Activated CD4-positive, alpha-beta T cell treated with anti-CD3 and anti-CD28 coated beads, Interleukin-2, amount 10 ng/mL, durations not matched to agents 24 days and 14 days (primary cell): ENCODE measurements at regions of chr20 and their contacts with region 1.

Region 1: DNA sequence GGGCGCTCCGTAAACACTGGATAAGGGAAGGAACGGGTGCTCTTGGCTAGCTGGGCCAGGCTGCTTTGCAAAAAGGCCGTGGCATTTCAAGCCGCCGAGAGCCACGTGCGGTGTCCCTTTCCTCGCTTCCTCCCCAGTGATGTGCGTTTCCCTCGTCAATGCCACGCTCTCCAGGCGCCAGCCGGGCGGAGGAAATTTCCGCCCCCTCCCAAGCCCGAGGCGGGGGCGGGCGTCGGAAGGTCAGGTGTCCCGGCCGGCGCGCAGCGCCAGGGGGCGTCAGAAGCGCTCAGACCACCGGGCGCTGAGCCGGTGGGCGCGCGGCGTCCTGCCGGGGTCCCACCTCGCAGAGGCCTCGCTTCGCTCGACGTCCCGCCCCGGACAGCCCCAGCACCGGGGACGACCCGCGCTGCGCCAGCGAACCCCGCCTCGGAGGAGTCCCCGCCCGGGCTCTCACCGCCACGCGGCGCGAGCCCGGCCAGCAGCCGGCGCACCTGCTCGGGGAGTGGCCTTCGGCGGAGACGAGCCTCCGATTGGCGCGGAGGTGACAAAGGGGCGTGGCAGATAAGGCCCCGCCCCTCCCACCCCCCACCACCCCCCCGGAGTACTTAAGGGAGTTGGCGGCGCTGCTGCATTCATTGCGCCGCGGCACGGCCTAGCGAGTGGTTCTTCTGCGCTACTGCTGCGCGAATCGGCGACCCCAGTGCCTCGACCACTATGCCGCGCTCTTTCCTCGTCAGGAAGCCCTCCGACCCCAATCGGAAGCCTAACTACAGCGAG is at the start of gene SNAI1:
- DNase-seq: peak; percentile 95
- H3K4me3 Mint-ChIP-seq: peak within 1 kb of the TSS; percentile 79
- H3K27ac Mint-ChIP-seq: peak within 1 kb of the TSS; percentile 78
- H3K4me1 Mint-ChIP-seq: peaks cover 13% of the 10 kb centered on the region
- H3K27me3 Mint-ChIP-seq: peaks cover 30% of the 10 kb centered on the region
- total RNA-seq, gene SNAI1: 1.6 and 2.3 TPM in 2 replicates

Region 2: GRCh38 chr20:50027611-50028105 is 45.1 kb after region 1 on chr20:
- intact Hi-C with region 1: no loop called
- DNase-seq: no peak
- H3K4me3 Mint-ChIP-seq: no peak overlapping the region
- H3K27ac Mint-ChIP-seq: no peak overlapping the region
- H3K4me1 Mint-ChIP-seq: no peaks in the 10 kb centered on the region
- H3K27me3 Mint-ChIP-seq: no peaks in the 10 kb centered on the region

Region 3: GRCh38 chr20:50070991-50071888 is 88.7 kb after region 1 on chr20:
- intact Hi-C with region 1: loop called (anchors 1 kb)
- DNase-seq: peak; percentile 98
- H3K4me3 Mint-ChIP-seq: peak overlapping the region; percentile 81
- H3K27ac Mint-ChIP-seq: no peak overlapping the region
- H3K4me1 Mint-ChIP-seq: peaks cover 6% of the 10 kb centered on the region
- H3K27me3 Mint-ChIP-seq: peaks cover 4% of the 10 kb centered on the region

Region 4: GRCh38 chr20:50085452-50086365 is 103.2 kb after region 1 on chr20:
- intact Hi-C with region 1: loop called (anchors 5 kb)
- DNase-seq: peak; percentile 81
- H3K4me3 Mint-ChIP-seq: peak overlapping the region; percentile 64
- H3K27ac Mint-ChIP-seq: peak overlapping the region; percentile 31
- H3K4me1 Mint-ChIP-seq: peaks cover 16% of the 10 kb centered on the region
- H3K27me3 Mint-ChIP-seq: no peaks in the 10 kb centered on the region